Spleen (tissue), 13 donors: ENCODE measurements at regions of chrX and their contacts with region 1.

Region 1: GRCh38 chrX:132615391-132616131 is 126.7 kb upstream of the MBNL3 start:
- DNase-seq: no peak
- H3K4me3 ChIP-seq: no peak overlapping the region
- H3K27ac ChIP-seq: no peak overlapping the region
- H3K4me1 ChIP-seq: no peaks in the 10 kb centered on the region
- H3K27me3 ChIP-seq: peaks cover 0 to 4% (median 0%) of the 10 kb centered on the region in 7 donors
- CTCF ChIP-seq: peak in 7 of 11 experiments; percentile 34 to 57 (median 53)
- POLR2A ChIP-seq: no peak

Region 2: DNA sequence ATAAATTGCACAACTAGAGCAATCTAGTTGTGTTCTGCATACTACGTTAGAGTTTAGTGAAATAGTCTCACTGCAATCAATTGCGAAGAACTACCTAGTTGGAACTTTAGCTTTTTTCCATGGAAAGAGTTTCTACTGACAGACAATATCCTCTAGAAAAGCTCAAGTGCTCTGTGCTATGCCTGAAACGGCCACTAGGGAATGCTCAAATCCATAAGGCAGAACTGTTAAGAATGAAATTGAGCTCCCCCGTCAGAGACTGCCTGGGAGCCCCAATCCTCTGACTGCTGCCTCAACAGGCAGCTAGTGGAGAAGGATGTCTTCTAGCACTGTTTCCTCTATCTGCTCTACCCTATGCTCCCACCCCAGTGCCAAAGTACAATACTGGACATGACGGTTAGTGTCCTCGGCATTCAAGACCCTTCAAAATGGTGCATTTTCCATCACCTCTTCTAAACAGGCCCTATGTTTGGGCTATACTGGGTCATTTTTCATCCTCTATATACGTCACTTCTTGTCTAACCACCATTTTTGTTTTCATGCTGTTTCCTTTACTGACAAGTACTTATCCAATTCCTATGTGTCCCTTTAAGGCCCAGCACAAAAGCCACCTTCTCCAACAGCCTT is 523.0 kb before region 1 on chrX:
- intact Hi-C with region 1: loop called (anchors 10 kb)
- DNase-seq: no peak
- H3K4me3 ChIP-seq: no peak overlapping the region
- H3K27ac ChIP-seq: no peak overlapping the region
- H3K4me1 ChIP-seq: no peaks in the 10 kb centered on the region
- H3K27me3 ChIP-seq: peaks cover 0 to 22% (median 0%) of the 10 kb centered on the region in 7 donors
- CTCF ChIP-seq: peak; percentile 45 to 74 (median 66)
- POLR2A ChIP-seq: no peak

Region 3: DNA sequence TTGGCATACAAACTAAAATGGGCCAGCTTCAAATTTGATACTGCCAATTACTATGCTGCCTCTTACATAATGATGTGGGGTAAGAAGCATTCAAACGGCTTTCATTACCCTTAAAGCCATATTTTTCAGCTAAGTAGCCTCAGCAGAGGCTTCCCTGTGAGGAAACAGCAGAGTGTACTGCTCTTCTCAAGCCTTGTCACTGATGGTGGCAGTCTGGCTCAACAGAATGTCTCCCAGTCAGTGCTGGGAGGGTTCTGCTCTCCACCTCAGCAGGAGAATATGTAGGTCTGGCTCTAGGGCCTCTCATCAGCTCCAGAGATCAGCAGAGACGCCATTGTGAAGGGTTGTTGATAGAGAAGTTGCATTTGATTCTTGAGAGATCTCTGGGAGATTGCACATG is 82.2 kb before region 1 on chrX:
- intact Hi-C with region 1: no loop called
- DNase-seq: no peak
- H3K4me3 ChIP-seq: no peak overlapping the region
- H3K27ac ChIP-seq: no peak overlapping the region
- H3K4me1 ChIP-seq: no peaks in the 10 kb centered on the region
- H3K27me3 ChIP-seq: peaks cover 0 to 12% (median 0%) of the 10 kb centered on the region in 7 donors
- CTCF ChIP-seq: no peak
- POLR2A ChIP-seq: no peak